ENCODE measurements at regions of chr10 and their contacts with region 1.

Region 1: DNA sequence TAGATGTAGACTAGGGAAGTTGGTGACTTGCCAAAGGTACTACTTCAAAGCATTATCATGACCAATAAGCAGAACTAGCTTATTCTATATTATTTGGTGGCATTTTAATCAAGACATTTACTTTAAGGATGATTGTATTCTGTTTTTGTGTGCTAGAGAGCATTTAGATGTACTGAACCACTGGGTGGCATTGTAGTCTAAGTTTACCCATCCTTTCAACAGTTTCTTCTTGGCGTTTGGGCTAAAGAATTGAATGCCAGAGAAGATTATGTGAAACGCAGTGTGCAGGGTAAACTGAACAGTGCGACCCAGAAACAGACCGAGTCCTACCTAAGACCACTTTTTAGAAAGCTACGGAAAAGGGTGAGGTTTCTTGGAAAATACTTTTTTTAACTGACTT is 26.8 kb downstream of the PRPF18 start:
- DNase-seq: peak in 1 of 2 experiments; percentile 49
- H3K4me3 ChIP-seq: no peak overlapping the region
- H3K4me3 Mint-ChIP-seq: no peak overlapping the region
- H3K27ac Mint-ChIP-seq: peak overlapping the region; percentile 42
- H3K4me1 ChIP-seq: peaks cover 28% of the 10 kb centered on the region
- H3K4me1 Mint-ChIP-seq: peaks cover 30% of the 10 kb centered on the region
- H3K27me3 ChIP-seq: no peaks in the 10 kb centered on the region
- H3K27me3 Mint-ChIP-seq: no peaks in the 10 kb centered on the region
- CTCF ChIP-seq: peak; percentile 49 to 58

Region 2: GRCh38 chr10:13631594-13631993 is 18.1 kb after region 1 on chr10:
- CTCF ChIA-PET with region 1: interaction called, 3 read pairs
- POLR2A ChIA-PET with region 1: no interaction called
- intact Hi-C with region 1: loop called (anchors 1 kb)
- DNase-seq: no peak
- H3K4me3 ChIP-seq: no peak overlapping the region
- H3K4me3 Mint-ChIP-seq: no peak overlapping the region
- H3K27ac Mint-ChIP-seq: no peak overlapping the region
- H3K4me1 ChIP-seq: peaks cover 38% of the 10 kb centered on the region
- H3K4me1 Mint-ChIP-seq: peaks cover 15% of the 10 kb centered on the region
- H3K27me3 ChIP-seq: no peaks in the 10 kb centered on the region
- H3K27me3 Mint-ChIP-seq: no peaks in the 10 kb centered on the region
- CTCF ChIP-seq: no peak

Region 3: GRCh38 chr10:13649844-13650521 is 36.5 kb after region 1 on chr10:
- CTCF ChIA-PET with region 1: interaction called, 3 read pairs
- POLR2A ChIA-PET with region 1: no interaction called
- intact Hi-C with region 1: loop called (anchors 1 kb)
- DNase-seq: peak in 1 of 2 experiments; percentile 26
- H3K4me3 ChIP-seq: no peak overlapping the region
- H3K4me3 Mint-ChIP-seq: no peak overlapping the region
- H3K27ac Mint-ChIP-seq: no peak overlapping the region
- H3K4me1 ChIP-seq: no peaks in the 10 kb centered on the region
- H3K4me1 Mint-ChIP-seq: no peaks in the 10 kb centered on the region
- H3K27me3 ChIP-seq: no peaks in the 10 kb centered on the region
- H3K27me3 Mint-ChIP-seq: no peaks in the 10 kb centered on the region
- CTCF ChIP-seq: no peak

Region 4: GRCh38 chr10:13776861-13777311 is 163.4 kb after region 1 on chr10:
- CTCF ChIA-PET with region 1: no interaction called
- POLR2A ChIA-PET with region 1: no interaction called
- intact Hi-C with region 1: loop called (anchors 1 kb)
- DNase-seq: no peak
- H3K4me3 ChIP-seq: no peak overlapping the region
- H3K4me3 Mint-ChIP-seq: no peak overlapping the region
- H3K27ac Mint-ChIP-seq: no peak overlapping the region
- H3K4me1 ChIP-seq: peaks cover 19% of the 10 kb centered on the region
- H3K4me1 Mint-ChIP-seq: peaks cover 13% of the 10 kb centered on the region
- H3K27me3 ChIP-seq: no peaks in the 10 kb centered on the region
- H3K27me3 Mint-ChIP-seq: no peaks in the 10 kb centered on the region
- CTCF ChIP-seq: no peak